Activated CD4-positive, alpha-beta T cell treated with anti-CD3 and anti-CD28 coated beads, Interleukin-2, amount 10 ng/mL, durations not matched to agents 24 days and 14 days (primary cell): ENCODE measurements at regions of chr6 and their contacts with region 1.

Region 1: DNA sequence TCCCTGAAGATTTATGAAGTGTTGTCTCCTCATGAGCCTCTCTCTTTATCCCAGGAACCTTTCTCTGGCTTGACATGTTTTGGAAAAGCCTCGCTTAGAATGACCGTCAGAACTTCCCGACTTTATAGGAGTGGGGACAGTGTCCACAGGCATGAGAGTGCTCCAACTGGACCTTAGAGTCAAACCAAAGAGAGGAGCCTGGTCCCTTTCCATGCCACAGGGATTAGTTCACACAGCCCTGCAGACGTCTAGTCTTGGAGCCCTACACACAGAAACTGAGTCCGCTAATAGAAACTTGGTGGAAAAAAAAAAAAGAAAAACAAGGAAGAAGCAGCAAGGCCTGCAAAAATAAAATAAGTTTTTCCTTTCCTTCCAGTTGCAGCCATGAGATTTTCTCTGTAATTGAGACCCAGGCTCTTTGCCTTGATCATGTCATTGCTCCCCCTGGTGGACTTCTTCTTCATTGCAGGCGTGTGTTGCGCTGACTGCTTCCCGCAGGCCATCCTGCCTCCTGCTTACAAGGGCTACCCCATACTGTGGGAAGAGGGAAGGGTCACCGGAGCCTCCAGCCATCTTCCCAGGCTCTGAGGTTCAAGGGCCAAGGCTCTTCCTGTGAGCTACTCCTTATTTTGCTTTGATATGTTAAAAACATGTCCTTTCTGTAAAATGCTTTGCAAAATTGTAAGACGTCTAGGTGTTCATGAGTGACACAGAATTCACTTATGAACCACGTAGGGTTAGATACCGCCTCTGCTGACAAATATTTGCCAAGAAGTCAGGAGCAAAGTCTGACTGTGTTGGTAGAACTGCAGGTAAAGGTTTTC is 201.0 kb downstream of the UST start:
- DNase-seq: peak; percentile 93
- H3K4me3 Mint-ChIP-seq: no peak overlapping the region
- H3K27ac Mint-ChIP-seq: no peak overlapping the region
- H3K4me1 Mint-ChIP-seq: peaks cover 2% of the 10 kb centered on the region
- H3K27me3 Mint-ChIP-seq: peaks cover 23% of the 10 kb centered on the region

Region 2: DNA sequence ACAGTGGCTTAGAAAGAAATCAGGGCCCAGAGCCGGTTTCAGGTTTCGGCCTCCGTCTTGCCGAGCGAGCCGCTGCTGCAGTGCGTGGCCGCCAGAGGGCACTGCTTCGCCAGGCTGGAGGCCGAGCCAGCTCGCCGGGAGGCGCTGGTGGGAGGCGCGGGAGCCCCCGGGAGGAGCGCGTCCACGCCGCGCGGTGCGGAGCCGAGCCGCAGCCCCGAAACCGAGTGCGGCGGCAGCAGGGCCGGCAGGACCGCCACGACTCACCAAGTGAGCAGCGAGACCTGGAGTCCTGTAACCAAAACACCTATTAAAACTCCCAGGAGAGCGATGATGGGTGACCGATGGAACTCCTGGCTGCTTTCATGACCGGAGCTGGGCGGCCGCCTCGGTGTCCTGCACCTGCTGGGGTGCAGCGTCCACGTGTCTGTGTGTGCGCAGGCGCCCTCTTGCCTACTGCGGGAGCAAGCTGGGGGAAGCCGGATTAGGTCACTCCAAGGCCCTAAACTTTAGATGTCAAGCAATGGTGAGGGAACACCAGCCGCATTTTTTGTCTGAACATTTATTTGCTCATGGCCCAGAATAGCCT is 387.9 kb before region 1 on chr6:
- intact Hi-C with region 1: loop called (anchors 2 kb)
- DNase-seq: peak; percentile 90
- H3K4me3 Mint-ChIP-seq: no peak overlapping the region
- H3K27ac Mint-ChIP-seq: no peak overlapping the region
- H3K4me1 Mint-ChIP-seq: peaks cover 7% of the 10 kb centered on the region
- H3K27me3 Mint-ChIP-seq: peaks cover 25% of the 10 kb centered on the region

Region 3: DNA sequence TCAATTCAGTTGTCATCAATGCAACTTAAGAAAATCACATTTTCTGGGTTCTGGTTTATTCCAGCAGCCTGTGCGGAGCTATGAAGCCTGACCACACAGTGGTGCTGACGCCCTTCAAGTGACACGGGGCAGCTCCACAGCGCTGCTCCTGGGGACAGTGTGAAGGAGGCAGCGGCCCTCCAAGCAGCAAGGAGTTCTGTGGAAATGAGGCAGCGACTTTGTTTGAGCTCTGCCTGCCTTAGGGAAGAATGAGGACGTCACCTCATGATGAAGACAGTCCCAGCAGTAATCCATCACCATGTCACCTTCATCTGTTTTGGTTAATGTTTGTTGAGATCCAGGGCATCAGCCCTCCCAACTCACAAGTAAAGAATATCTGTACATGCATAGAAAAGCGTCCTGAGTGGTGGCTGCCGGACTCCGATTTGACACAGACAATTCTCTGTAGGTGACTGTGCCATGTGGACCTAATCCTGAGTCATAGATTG is 369.5 kb before region 1 on chr6:
- intact Hi-C with region 1: loop called (anchors 5 kb)
- DNase-seq: peak; percentile 79
- H3K4me3 Mint-ChIP-seq: no peak overlapping the region
- H3K27ac Mint-ChIP-seq: no peak overlapping the region
- H3K4me1 Mint-ChIP-seq: no peaks in the 10 kb centered on the region
- H3K27me3 Mint-ChIP-seq: peaks cover 38% of the 10 kb centered on the region

Region 4: DNA sequence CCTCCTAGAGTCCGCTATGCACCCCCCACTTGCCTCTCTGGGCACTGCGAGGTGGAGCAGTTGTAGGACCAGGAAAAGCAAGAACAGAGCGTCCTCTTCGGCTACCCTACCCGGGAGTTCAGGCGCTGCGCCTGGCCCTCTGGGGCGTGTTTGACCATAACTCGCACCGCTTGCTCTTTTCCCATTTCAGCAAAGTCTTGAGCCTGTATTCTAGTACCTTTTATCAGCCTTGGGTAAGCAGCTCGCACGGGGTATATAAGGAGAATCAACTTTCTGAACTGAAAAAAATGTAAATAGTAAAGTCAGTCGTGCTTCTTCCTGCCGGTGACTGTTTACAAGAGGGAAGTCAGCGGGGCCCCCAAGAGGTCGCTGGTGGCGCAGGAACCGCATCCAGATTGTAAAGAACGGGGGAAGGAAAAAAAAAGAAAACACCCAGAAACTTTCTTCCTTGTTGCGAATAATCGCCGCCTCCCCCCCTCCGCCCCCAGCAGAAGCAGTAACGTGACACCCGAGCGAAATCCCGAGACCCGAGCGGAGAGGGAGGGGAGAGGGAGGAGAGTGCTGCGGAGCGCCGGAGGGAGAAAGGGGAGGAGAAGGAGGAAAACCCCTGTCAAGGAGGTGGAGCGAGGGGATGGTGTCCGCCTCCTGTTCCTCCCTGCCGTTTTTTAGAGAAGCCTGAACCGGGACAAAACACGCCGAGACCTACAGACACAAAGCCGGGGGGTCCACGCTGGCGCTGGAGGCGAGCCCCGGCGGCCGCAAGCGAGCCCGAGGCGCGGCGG is 201.3 kb before region 1 on chr6 and contains the start of gene UST:
- intact Hi-C with region 1: loop called (anchors 1 kb)
- DNase-seq: peak; percentile 83
- H3K4me3 Mint-ChIP-seq: peak within 1 kb of the TSS; percentile 94
- H3K27ac Mint-ChIP-seq: peak within 1 kb of the TSS; percentile 42
- H3K4me1 Mint-ChIP-seq: peaks cover 11% of the 10 kb centered on the region
- H3K27me3 Mint-ChIP-seq: peaks cover 76% of the 10 kb centered on the region
- total RNA-seq, gene UST: 0.70 and 0.90 TPM in 2 replicates

Region 5: DNA sequence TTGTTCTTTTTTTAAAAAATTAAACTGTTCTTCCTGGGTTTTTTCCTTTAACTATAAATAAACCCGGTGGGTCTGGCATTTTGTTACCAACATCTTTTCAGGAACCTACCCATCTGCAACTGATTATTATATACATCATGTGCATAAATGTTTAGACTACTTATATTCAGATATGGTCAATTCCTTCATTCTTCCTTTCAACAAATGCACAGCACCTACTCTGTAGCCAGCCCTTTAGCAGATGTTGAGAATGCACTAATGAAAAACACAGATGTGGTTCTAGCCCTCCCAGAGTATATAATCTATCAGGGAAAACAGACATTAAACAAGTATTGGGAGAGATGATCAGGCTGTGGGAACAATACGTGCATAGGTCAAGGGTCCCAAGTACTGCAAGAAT is 36.1 kb after region 1 on chr6:
- intact Hi-C with region 1: no loop called
- DNase-seq: no peak
- H3K4me3 Mint-ChIP-seq: no peak overlapping the region
- H3K27ac Mint-ChIP-seq: no peak overlapping the region
- H3K4me1 Mint-ChIP-seq: no peaks in the 10 kb centered on the region
- H3K27me3 Mint-ChIP-seq: peaks cover 33% of the 10 kb centered on the region